ENCODE measurements at regions of chr1 and their contacts with region 1.

Region 1: GRCh38 chr1:240402326-240402725 is 209.6 kb downstream of the GREM2 start:
- DNase-seq: no peak
- H3K4me3 ChIP-seq: no peak overlapping the region
- CTCF ChIP-seq: no peak

Region 2: DNA sequence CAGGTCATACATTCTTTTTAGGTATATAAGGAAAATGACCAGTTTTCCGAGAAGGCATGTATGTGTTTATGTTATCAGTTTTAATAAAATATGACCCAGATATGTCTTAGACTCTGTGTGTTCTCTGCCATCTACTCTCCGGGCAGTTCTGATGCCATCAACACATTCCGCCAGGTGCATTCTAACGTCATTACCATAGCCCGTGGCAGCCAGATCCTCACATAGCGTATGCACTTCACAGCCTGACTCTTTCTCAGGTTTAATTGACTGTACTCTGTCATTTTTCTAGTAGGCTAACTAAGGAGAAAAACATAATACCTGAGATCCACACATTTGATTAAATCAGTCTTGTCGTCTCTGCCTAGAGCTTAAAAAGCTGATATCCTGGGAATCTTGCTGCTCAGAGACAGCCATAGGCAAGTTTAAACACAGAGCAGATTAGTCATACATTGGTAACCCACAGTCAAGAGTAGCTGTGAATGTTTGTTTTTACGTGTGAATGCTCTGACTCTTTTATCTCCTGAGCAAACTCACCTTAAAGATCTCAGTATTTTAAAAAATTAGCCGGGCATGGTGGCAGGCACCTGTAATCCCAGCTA is 33.7 kb after region 1 on chr1:
- in situ Hi-C with region 1: loop called (anchors 5 kb)
- DNase-seq: no peak
- H3K4me3 ChIP-seq: no peak overlapping the region
- CTCF ChIP-seq: no peak

Region 3: DNA sequence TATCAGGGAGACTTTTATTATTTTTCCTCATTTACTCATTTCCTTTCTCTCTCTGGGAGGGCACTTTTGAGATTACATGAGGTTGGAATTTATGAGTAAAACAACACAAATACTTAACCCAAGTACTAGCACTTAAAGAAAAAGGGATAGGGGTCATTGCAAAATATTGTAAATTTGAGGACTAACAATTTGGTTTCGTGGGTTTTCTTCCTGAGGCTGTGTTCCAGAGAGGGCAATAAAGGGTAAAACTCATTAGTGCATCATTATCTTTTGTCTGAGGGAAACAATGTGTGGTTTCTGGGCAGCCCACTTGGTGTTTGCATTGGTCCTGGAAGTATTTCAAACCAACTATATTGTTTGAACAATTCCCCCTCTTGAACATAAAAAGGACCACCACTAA is 113.2 kb after region 1 on chr1:
- in situ Hi-C with region 1: no loop called
- DNase-seq: peak; percentile 87
- H3K4me3 ChIP-seq: no peak overlapping the region
- CTCF ChIP-seq: no peak

Measured in astrocyte of the cerebellum (primary cell).